ENCODE measurements at regions of chr1 and their contacts with region 1.

Region 1: GRCh38 chr1:23224714-23225648 is 7.7 kb upstream of the HTR1D start:
- DNase-seq: no peak
- ATAC-seq: no peak
- H3K4me3 ChIP-seq: no peak overlapping the region
- H3K27ac ChIP-seq: no peak overlapping the region
- H3K4me1 ChIP-seq: no peaks in the 10 kb centered on the region
- H3K27me3 ChIP-seq: no peaks in the 10 kb centered on the region; the same call in 1 of the 2 replicates
- CTCF ChIP-seq: no peak
- POLR2A ChIP-seq: no peak
- RAD21 ChIP-seq: no peak

Region 2: GRCh38 chr1:23177438-23178380 is 47.3 kb before region 1 on chr1:
- CTCF ChIA-PET with region 1: no interaction called
- POLR2A ChIA-PET with region 1: no interaction called
- RAD21 ChIA-PET with region 1: no interaction called
- intact Hi-C with region 1: no loop called
- DNase-seq: no peak
- ATAC-seq: peak; percentile 81
- H3K4me3 ChIP-seq: peak overlapping the region; percentile 49 to 63
- H3K27ac ChIP-seq: no peak overlapping the region
- H3K4me1 ChIP-seq: peaks cover 2 to 29% of the 10 kb centered on the region in 2 experiments; a peak in 3 of 4 replicates
- H3K27me3 ChIP-seq: no peaks in the 10 kb centered on the region
- CTCF ChIP-seq: peak in 1 of 3 experiments; percentile 18; a peak in 1 of 6 replicates
- POLR2A ChIP-seq: no peak
- RAD21 ChIP-seq: no peak

Region 3: DNA sequence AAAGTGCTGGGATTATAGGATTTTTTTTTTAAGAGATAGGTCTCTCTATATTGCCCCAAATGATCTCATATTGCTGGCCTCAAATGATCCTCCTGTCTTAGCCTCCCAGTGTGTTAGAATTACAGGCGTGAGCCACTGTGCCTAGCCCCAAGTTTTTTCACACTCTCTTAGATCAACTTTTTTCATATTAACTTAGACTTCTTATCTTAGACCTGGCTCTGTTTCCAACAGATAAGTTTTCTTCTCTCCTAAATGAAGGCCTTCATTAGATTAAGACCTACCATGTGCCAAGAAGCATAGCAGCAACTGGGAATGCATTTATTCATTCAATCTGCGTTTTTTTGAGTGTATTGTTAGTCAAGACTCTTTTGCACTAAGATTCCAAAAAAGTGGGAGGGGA is 12.5 kb after region 1 on chr1:
- CTCF ChIA-PET with region 1: no interaction called
- POLR2A ChIA-PET with region 1: no interaction called
- RAD21 ChIA-PET with region 1: no interaction called
- intact Hi-C with region 1: no loop called
- DNase-seq: no peak
- ATAC-seq: no peak
- H3K4me3 ChIP-seq: no peak overlapping the region
- H3K27ac ChIP-seq: no peak overlapping the region
- H3K4me1 ChIP-seq: peaks cover 0 to 6% of the 10 kb centered on the region in 2 experiments; a peak in 2 of 4 replicates
- H3K27me3 ChIP-seq: no peaks in the 10 kb centered on the region
- CTCF ChIP-seq: no peak
- POLR2A ChIP-seq: no peak
- RAD21 ChIP-seq: no peak

Region 4: GRCh38 chr1:23273450-23274133 is 48.6 kb after region 1 on chr1:
- CTCF ChIA-PET with region 1: no interaction called
- POLR2A ChIA-PET with region 1: no interaction called
- RAD21 ChIA-PET with region 1: no interaction called
- intact Hi-C with region 1: loop called (anchors 5 kb)
- DNase-seq: peak; percentile 6
- ATAC-seq: no peak
- H3K4me3 ChIP-seq: no peak overlapping the region
- H3K27ac ChIP-seq: no peak overlapping the region
- H3K4me1 ChIP-seq: peaks cover 29 to 41% of the 10 kb centered on the region in 2 experiments
- H3K27me3 ChIP-seq: no peaks in the 10 kb centered on the region
- CTCF ChIP-seq: no peak
- POLR2A ChIP-seq: no peak
- RAD21 ChIP-seq: no peak

Measured in HCT116 (cell line).